ENCODE measurements at regions of chr13 and their contacts with region 1.

Region 1: GRCh38 chr13:51729866-51730546 is 74.0 kb downstream of the DHRS12 start:
- DNase-seq: peak; percentile 76 to 80
- H3K4me3 ChIP-seq: peak overlapping the region; percentile 2 to 12
- H3K27ac ChIP-seq: peak overlapping the region; percentile 85 to 90
- H3K4me1 ChIP-seq: peaks cover 0 to 69% (median 45%) of the 10 kb centered on the region in 4 donors
- H3K27me3 ChIP-seq: no peaks in the 10 kb centered on the region
- CTCF ChIP-seq: peak in 1 of 2 experiments; percentile 9

Region 2: DNA sequence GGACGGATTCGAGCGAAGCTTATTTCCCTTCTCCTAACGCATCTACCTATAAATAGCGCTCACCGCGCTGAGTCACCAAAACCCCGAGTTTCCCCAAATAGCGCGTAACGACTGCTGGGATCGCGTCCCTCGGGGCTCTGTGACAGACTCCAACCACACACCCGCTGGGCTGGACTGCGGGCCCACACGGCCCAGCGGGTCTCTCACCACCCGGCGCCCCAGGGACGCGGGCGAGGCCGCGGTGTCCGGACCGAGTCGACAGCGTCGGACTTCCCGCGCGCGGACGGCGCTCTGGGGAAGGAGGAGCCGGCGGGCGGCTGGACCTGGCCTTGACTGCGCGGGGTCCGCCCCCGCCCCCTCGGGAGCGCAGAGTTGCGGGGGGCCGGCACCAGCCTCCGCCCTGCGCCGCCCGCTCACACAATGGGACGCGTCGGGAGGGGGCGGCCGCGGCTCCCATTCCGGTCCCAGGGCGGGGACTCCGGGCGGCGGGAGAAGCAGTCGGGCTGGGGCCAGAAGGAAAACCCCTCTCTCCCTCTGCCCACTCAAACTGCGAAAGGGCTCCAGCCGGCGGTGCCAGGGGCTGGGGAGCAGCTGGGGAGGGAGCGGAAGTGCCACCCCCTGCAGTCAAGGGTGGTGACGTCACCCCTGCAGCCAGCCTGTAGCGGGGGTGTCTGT is 1606.0 kb before region 1 on chr13:
- intact Hi-C with region 1: loop called (anchors 10 kb)
- DNase-seq: peak; percentile 90 to 95
- H3K4me3 ChIP-seq: peak overlapping the region; percentile 95 to 96
- H3K27ac ChIP-seq: peak overlapping the region; percentile 100
- H3K4me1 ChIP-seq: peaks cover 0 to 35% (median 28%) of the 10 kb centered on the region in 4 donors
- H3K27me3 ChIP-seq: no peaks in the 10 kb centered on the region
- CTCF ChIP-seq: no peak

Region 3: DNA sequence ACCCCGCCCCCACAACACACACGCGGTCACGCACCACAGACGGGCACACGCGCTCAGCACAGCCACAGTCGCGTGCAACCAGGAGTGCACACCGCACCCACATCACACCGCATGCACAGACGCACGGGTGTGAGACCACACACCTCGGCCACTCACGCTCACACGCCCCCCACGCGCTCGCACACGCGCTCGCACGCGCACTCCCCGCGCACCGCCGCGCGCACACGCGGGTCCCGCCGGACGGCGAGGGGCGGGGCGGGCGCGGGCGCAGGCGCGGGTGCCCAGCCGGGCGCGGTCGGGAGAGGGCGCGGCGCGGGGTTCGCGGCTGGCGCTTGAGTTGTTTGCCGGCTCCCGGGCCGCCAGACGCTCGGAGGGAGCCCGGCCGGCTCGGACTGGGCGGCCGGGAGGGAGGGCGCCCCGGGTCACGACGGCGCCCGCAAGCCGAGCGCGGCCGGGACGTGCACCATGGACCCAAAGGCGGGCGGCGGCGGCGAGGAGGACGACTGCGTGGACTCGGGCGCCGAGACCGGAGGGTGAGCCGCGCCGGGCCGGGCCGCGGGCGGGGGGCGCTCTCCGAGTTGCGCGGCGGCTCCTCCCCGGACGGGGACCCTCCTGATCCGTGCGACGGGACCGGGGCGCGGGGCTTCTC is 507.8 kb before region 1 on chr13 and contains the start of gene FAM124A:
- intact Hi-C with region 1: loop called (anchors 10 kb)
- DNase-seq: no peak
- H3K4me3 ChIP-seq: peak within 1 kb of the TSS; percentile 90 to 93
- H3K27ac ChIP-seq: peak within 1 kb of the TSS; percentile 51 to 63
- H3K4me1 ChIP-seq: peaks cover 0 to 19% (median 7%) of the 10 kb centered on the region in 4 donors
- H3K27me3 ChIP-seq: no peaks in the 10 kb centered on the region
- CTCF ChIP-seq: peak in 1 of 2 experiments; percentile 63

Region 4: DNA sequence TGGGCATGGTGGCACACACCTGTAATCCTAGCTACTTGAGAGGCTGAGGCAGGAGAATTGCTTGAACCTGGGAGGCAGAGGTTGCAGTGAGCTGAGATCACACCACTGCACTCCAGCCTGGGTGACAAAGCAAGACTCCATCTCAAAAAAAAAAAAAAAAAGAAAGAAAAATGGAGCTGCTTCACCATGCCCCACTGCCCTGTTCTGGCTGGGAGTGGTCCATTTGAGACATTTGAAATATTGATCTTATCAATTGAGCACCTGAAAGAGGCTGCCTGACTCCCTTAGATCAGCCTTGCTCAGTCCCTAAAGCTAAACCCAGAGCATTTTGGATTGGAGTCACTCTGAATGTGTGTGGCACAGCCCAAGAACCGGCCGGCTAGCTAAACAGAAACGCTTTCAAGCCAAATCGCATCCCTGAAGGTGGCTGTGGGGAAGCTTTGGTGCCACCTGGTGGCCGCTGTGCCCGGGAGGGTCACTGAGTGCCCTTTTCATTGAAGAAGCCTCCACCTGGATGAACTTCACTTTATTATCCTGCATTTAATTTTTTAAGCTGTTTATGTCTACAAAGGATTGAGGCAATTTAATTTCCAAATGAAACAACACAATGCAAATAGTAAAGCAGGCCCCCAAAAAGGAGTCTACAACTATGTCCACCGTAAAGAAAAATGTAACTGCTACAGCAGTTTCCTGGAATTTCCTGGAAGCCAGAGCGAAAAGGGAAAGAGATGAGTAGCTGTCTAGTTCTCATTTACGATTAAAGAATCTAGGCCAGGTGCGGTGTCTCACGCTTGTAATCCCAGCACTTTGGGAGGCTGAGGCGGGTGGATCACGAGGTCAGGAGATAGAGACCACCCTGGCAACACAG is 443.6 kb before region 1 on chr13:
- intact Hi-C with region 1: loop called (anchors 10 kb)
- DNase-seq: peak; percentile 62 to 84
- H3K4me3 ChIP-seq: no peak overlapping the region
- H3K27ac ChIP-seq: no peak overlapping the region
- H3K4me1 ChIP-seq: peaks cover 0 to 8% (median 3%) of the 10 kb centered on the region in 4 donors
- H3K27me3 ChIP-seq: no peaks in the 10 kb centered on the region
- CTCF ChIP-seq: peak; percentile 81 to 93

Region 5: DNA sequence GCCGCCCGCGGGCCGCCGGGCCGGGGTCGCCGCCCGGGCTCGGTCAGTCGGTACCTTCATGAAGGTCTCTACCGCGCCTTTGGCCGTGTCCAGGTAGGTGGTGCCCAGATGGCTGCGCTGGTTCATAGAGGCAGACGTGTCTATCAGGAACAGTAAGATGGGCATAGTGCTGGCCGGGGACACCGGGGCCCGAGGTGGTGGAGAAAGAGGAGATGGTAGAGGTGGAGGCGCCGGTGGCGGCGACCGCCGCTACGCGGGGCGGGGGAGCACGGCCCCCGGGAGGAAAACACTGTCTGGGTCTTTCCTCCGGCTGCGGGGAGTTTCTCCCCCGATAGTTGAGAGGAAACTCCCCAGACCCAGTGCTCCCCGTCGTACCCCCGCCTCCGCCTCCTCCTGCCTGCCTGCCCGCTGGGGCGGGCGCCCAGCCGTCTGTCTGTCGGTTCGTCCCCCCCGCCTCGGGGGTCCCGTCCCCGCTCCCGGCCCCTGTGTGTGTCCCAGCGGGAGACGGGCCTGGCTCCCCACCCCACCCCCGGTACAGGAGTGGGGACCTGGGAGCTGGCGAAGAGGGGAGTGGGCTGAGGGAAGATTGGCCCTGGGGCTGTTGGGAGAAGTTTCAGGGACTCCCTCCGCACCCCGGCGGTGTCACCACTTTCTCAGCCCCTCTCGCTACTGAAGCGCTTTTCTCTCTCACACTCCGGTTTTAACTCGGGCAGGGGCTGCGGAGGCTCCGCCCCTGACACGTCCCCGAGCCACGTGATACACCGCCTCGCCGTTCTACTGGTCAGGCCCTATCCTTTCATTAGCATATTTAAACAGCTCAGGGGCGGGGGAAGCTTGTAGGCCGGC is 277.4 kb before region 1 on chr13 and contains the start of gene INTS6:
- intact Hi-C with region 1: loop called (anchors 10 kb)
- DNase-seq: peak; percentile 100
- H3K4me3 ChIP-seq: peak within 1 kb of the TSS; percentile 85 to 97
- H3K27ac ChIP-seq: peak within 1 kb of the TSS; percentile 98 to 100
- H3K4me1 ChIP-seq: peaks cover 0 to 32% (median 11%) of the 10 kb centered on the region in 4 donors
- H3K27me3 ChIP-seq: no peaks in the 10 kb centered on the region
- CTCF ChIP-seq: no peak

Region 6: GRCh38 chr13:51583875-51584730 is 145.9 kb before region 1 on chr13 and contains the start of gene WDFY2:
- intact Hi-C with region 1: loop called (anchors 10 kb)
- DNase-seq: peak; percentile 100
- H3K4me3 ChIP-seq: peak within 1 kb of the TSS; percentile 75 to 97
- H3K27ac ChIP-seq: peak within 1 kb of the TSS; percentile 77 to 88
- H3K4me1 ChIP-seq: peaks cover 0 to 35% (median 20%) of the 10 kb centered on the region in 4 donors
- H3K27me3 ChIP-seq: no peaks in the 10 kb centered on the region
- CTCF ChIP-seq: peak in 1 of 2 experiments; percentile 44

Measured in tibial artery (tissue), 4 donors.